Activated B cell treated with CpG ODN at 0.5 μM for 24 hours (primary cell): ENCODE measurements at regions of chr16 and their contacts with region 1.

Region 1: DNA sequence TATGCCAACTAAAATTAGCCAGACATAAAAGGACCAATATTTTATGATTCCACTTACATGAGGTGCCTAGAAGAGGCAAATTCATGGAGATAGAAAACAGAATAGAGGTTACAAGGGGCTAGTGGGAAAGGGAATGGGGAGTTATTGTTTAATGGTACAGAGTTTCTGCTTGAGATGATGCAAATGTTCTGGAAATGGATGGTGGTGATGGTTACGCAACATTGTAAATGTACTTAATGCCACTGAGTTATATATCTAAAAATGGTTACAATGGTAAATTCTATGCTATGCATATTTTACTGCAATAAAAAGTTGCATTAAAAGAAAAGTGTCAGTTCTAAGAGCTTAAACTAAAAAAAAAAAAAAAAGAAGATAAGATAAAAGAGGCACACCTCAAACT is 17.9 kb downstream of the MT1X start:
- DNase-seq: no peak
- ATAC-seq: no peak
- H3K4me3 Mint-ChIP-seq: no peak overlapping the region
- H3K27ac Mint-ChIP-seq: no peak overlapping the region
- H3K4me1 Mint-ChIP-seq: peaks cover 8% of the 10 kb centered on the region
- H3K27me3 Mint-ChIP-seq: no peaks in the 10 kb centered on the region
- CTCF ChIP-seq: no peak

Region 2: DNA sequence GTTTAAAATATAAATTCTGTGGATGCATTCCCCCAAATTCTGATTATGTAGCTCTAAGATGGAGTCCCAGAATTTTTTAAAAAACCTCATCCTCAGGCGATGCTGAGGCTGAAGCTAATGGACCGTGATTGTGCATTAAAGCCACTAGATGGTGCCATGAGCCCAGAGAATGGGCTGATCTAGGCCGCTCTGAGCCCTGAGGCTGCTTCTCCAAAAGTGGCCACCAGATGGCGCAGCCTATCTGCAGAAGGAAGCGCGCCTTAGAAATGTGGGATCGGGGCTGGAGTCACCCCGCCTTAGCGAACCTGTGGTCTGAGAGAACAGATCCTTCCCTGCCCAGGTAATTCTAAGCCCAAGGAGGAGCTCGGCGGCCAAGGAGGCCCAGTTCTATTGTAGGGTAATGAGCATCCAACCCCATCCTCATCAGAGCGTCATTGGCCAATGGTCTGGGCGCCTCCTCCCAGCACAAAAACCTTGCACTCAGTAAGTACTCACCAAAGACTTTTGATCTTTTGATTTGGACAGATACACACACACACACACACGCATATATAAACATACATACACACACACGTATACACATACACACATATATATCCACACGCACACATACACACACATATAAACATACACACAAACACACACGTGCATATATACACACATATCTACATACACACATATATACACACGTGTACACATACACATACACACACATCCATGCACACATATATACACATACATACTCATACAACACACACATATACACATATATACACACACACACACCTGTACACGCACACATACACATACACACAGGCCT is 1234.9 kb before region 1 on chr16:
- CTCF ChIA-PET with region 1: no interaction called
- POLR2A ChIA-PET with region 1: no interaction called
- intact Hi-C with region 1: loop called (anchors 1 kb)
- DNase-seq: peak; percentile 73
- ATAC-seq: peak; percentile 98
- H3K4me3 Mint-ChIP-seq: no peak overlapping the region
- H3K27ac Mint-ChIP-seq: no peak overlapping the region
- H3K4me1 Mint-ChIP-seq: no peaks in the 10 kb centered on the region
- H3K27me3 Mint-ChIP-seq: no peaks in the 10 kb centered on the region
- CTCF ChIP-seq: peak; percentile 86

Region 3: DNA sequence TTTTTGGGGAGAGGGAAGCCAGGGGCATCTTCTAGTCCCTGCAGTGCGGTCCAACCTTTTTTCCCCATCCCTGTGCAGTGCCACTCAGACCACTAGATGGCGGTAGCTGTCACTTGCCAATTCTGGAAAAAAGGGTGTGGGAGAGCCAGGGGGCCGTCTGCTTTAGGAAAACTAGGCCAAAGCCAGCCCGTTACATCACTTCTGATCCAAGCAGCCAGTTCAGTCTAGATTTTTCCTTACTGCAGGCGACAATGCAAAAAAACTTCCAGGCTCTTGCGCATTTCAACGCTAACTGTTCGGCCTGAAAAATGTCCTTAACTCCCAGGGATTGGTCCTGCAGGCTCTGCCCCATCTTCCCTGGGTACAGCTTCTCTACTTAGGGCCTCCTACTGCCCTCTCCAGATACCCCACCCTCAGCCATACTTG is 755.8 kb before region 1 on chr16:
- CTCF ChIA-PET with region 1: no interaction called
- POLR2A ChIA-PET with region 1: no interaction called
- intact Hi-C with region 1: loop called (anchors 2 kb)
- DNase-seq: peak; percentile 34
- ATAC-seq: no peak
- H3K4me3 Mint-ChIP-seq: no peak overlapping the region
- H3K27ac Mint-ChIP-seq: no peak overlapping the region
- H3K4me1 Mint-ChIP-seq: peaks cover 5% of the 10 kb centered on the region
- H3K27me3 Mint-ChIP-seq: peaks cover 22% of the 10 kb centered on the region
- CTCF ChIP-seq: peak; percentile 70

Region 4: GRCh38 chr16:56450986-56451752 is 249.0 kb before region 1 on chr16 and contains the starts of genes NUDT21 and OGFOD1:
- CTCF ChIA-PET with region 1: interaction called, 4 read pairs
- POLR2A ChIA-PET with region 1: interaction called, 9 read pairs
- intact Hi-C with region 1: loop called (anchors 1 kb)
- DNase-seq: peak; percentile 73
- ATAC-seq: peak; percentile 99
- H3K4me3 Mint-ChIP-seq: peak within 1 kb of the TSS; percentile 99
- H3K27ac Mint-ChIP-seq: peak within 1 kb of the TSS; percentile 97
- H3K4me1 Mint-ChIP-seq: peaks cover 41% of the 10 kb centered on the region
- H3K27me3 Mint-ChIP-seq: no peaks in the 10 kb centered on the region
- CTCF ChIP-seq: no peak
- total RNA-seq, gene NUDT21: 108 and 111 TPM in 2 replicates
- total RNA-seq, gene OGFOD1: 45.6 and 51.8 TPM in 2 replicates

Region 5: GRCh38 chr16:56519459-56520250 is 180.5 kb before region 1 on chr16 and contains the start of gene BBS2:
- CTCF ChIA-PET with region 1: interaction called, 27 read pairs
- POLR2A ChIA-PET with region 1: interaction called, 7 read pairs
- intact Hi-C with region 1: loop called (anchors 1 kb)
- DNase-seq: peak; percentile 94
- ATAC-seq: peak; percentile 92
- H3K4me3 Mint-ChIP-seq: peak within 1 kb of the TSS; percentile 87
- H3K27ac Mint-ChIP-seq: peak within 1 kb of the TSS; percentile 87
- H3K4me1 Mint-ChIP-seq: peaks cover 20% of the 10 kb centered on the region
- H3K27me3 Mint-ChIP-seq: no peaks in the 10 kb centered on the region
- CTCF ChIP-seq: no peak
- total RNA-seq, gene BBS2: 25.5 and 32.3 TPM in 2 replicates

Region 6: GRCh38 chr16:56600398-56600999 is 99.7 kb before region 1 on chr16:
- CTCF ChIA-PET with region 1: interaction called, 20 read pairs
- POLR2A ChIA-PET with region 1: no interaction called
- intact Hi-C with region 1: loop called (anchors 1 kb)
- DNase-seq: no peak
- ATAC-seq: peak; percentile 50
- H3K4me3 Mint-ChIP-seq: no peak overlapping the region
- H3K27ac Mint-ChIP-seq: no peak overlapping the region
- H3K4me1 Mint-ChIP-seq: no peaks in the 10 kb centered on the region
- H3K27me3 Mint-ChIP-seq: peaks cover 26% of the 10 kb centered on the region
- CTCF ChIP-seq: no peak

Region 7: DNA sequence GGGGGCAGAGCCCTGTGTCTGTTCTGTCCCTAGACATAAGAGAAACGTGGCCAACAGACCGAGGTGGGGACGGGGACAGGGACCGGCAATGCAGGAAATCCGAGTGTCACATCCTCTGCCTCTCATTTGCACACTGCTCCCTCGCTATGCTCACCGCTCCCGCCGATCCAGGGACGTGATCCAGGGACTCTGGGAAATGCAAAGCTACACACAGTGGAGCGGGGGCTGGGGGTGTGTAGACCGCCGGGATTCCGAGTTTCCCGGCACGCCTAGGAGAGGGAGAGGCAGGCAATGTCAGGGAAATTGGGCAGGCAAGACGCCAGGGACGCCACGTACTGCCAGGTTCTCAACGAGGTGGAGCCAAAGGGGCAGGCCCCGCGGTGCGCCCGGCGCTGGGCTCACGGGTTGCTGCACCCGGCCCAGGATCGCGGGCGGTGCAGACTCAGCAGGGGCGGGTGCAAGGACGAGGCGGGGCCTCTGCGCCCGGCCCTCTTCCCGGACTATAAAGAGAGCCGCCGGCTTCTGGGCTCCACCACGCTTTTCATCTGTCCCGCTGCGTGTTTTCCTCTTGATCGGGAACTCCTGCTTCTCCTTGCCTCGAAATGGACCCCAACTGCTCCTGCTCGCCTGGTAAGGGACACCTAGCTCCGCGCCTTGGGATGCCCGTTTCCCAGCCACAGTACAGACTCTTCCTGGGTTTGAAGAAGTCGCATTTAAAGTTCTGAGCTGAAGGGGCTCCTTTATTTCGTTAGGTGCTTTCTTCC is 18.1 kb before region 1 on chr16 and contains the start of gene MT1X:
- CTCF ChIA-PET with region 1: interaction called, 9 read pairs
- POLR2A ChIA-PET with region 1: interaction called, 5 read pairs
- intact Hi-C with region 1: loop called (anchors 2 kb)
- DNase-seq: peak; percentile 85
- ATAC-seq: peak; percentile 98
- H3K4me3 Mint-ChIP-seq: peak within 1 kb of the TSS; percentile 93
- H3K27ac Mint-ChIP-seq: peak within 1 kb of the TSS; percentile 84
- H3K4me1 Mint-ChIP-seq: peaks cover 11% of the 10 kb centered on the region
- H3K27me3 Mint-ChIP-seq: peaks cover 3% of the 10 kb centered on the region
- CTCF ChIP-seq: no peak
- total RNA-seq, gene MT1X: 36.3 and 48.9 TPM in 2 replicates